Psoas muscle (tissue), 8 donors: ENCODE measurements at regions of chr5 and their contacts with region 1.

Region 1: GRCh38 chr5:174935854-174936474 is 211.6 kb downstream of the MSX2 start:
- DNase-seq: peak; percentile 57 to 74
- ATAC-seq: peak in 2 of 4 donors; percentile 70 to 78
- H3K4me3 ChIP-seq: no peak overlapping the region
- H3K27ac ChIP-seq: no peak overlapping the region
- H3K4me1 ChIP-seq: no peaks in the 10 kb centered on the region
- H3K27me3 ChIP-seq: peaks cover 0 to 3% (median 0%) of the 10 kb centered on the region in 3 donors
- CTCF ChIP-seq: peak; percentile 84

Region 2: DNA sequence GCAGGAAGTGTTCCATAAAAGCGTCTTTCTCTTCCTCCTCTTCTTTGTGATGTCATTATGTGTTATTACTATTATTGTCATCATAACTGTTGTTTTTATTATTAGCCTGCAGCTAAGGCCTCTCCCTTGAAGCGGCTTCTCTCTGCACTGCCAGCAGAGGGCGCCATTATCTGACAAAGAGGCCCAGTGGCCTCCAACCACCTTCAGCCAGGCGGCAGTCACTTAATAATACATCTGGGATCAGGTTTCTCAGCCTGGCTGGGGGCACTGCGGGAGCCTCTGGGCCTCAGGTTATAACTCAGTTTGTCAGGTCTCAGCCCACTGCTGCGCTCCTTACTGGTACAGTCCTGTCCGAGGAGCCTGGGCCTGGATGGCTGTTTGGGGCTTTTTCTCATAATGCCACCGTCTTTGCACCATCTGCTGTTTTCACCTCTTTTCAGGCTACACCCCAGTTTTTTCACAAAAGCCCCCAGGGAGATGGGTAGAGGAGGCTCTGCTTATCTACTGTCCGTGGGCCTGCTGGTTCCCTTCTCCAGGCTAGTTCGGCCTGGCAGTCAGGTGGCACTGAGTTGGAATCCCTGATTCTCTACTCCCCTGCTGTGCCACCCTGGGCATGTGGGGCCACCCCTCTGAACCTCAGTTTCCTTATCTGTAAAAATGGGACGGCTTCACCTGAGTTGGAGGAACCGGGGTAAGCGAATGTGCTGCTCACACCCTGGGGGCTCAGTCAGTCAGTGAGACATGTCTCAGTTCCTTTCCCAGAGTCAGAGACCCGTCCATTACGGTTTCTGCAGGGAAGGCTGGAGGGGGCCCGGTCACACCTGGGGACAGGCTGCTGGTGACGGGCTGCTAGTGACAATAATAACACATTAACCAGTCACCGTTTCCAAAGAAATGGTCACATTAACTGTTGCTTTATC is 608.4 kb before region 1 on chr5:
- intact Hi-C with region 1: loop called in 1 of 2 experiments (anchors 5 kb)
- DNase-seq: peak; percentile 61 to 75
- ATAC-seq: peak; percentile 64 to 86 (median 81)
- H3K4me3 ChIP-seq: no peak overlapping the region
- H3K27ac ChIP-seq: no peak overlapping the region
- H3K4me1 ChIP-seq: no peaks in the 10 kb centered on the region
- H3K27me3 ChIP-seq: peaks cover 0 to 28% (median 2%) of the 10 kb centered on the region in 3 donors
- CTCF ChIP-seq: peak; percentile 65

Region 3: GRCh38 chr5:174418928-174419796 is 516.8 kb before region 1 on chr5:
- intact Hi-C with region 1: loop called (anchors 2 to 10 kb)
- DNase-seq: peak; percentile 87 to 93
- ATAC-seq: peak; percentile 82 to 89 (median 84)
- H3K4me3 ChIP-seq: peak overlapping the region; percentile 24
- H3K27ac ChIP-seq: no peak overlapping the region
- H3K4me1 ChIP-seq: peaks cover 8% of the 10 kb centered on the region
- H3K27me3 ChIP-seq: peaks cover 0 to 26% (median 4%) of the 10 kb centered on the region in 3 donors
- CTCF ChIP-seq: peak; percentile 89

Region 4: GRCh38 chr5:174493530-174493929 is 442.4 kb before region 1 on chr5:
- intact Hi-C with region 1: loop called in 1 of 2 experiments (anchors 10 kb)
- DNase-seq: no peak
- ATAC-seq: no peak
- H3K4me3 ChIP-seq: no peak overlapping the region
- H3K27ac ChIP-seq: no peak overlapping the region
- H3K4me1 ChIP-seq: no peaks in the 10 kb centered on the region
- H3K27me3 ChIP-seq: no peaks in the 10 kb centered on the region
- CTCF ChIP-seq: no peak

Region 5: GRCh38 chr5:174877987-174878386 is 58.0 kb before region 1 on chr5:
- intact Hi-C with region 1: no loop called
- DNase-seq: no peak
- ATAC-seq: no peak
- H3K4me3 ChIP-seq: no peak overlapping the region
- H3K27ac ChIP-seq: no peak overlapping the region
- H3K4me1 ChIP-seq: no peaks in the 10 kb centered on the region
- H3K27me3 ChIP-seq: no peaks in the 10 kb centered on the region
- CTCF ChIP-seq: no peak

Region 6: DNA sequence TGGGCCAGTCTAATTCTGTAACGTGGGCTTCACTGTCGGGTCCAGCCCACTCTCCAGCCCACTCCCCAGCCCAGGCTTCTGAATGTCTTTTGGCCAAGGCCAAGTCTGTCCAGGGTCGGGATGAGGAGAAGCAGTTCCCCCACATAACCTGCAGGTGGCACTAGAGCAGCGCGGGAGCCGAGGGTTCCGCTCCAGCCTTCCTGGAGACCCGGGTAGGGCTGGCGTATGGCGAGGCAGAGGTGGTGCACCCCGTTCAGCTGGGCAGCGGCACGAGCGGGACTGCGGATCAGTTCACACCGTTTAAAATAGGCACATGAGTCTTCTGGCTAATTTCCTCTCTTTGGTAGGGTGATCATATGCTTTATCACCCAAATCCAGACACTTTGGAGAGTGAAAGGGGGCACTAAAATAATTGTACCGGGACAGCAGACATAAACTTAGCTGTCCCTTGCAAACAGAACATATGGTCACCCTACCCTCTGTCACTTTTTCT is 25.7 kb before region 1 on chr5:
- intact Hi-C with region 1: loop called in 1 of 2 experiments (anchors 2 kb)
- DNase-seq: peak; percentile 60 to 71
- ATAC-seq: peak; percentile 69 to 87 (median 82)
- H3K4me3 ChIP-seq: no peak overlapping the region
- H3K27ac ChIP-seq: no peak overlapping the region
- H3K4me1 ChIP-seq: no peaks in the 10 kb centered on the region
- H3K27me3 ChIP-seq: peaks cover 0 to 4% (median 0%) of the 10 kb centered on the region in 3 donors
- CTCF ChIP-seq: peak; percentile 76